Naive thymus-derived CD4-positive, alpha-beta T cell (primary cell): ENCODE measurements at regions of chr12 and their contacts with region 1.

Region 1: DNA sequence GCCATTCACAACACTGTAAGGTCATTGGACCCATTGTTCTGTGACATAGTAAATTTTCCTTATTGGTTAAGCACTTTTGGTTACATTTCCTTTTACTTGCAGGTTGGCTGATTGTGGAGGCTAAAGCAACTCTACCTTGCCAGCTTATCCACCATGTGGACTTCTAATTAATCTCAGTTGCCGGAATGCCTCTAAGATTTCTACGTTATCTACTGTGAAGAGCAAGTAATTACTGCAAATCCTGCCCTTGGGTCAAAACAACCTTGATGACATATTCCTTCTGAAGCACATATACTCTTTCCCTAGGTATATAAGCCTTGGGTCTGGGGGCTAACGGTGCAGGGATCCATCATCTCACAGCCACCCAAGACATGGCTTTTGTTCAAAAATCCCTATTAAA is 19.5 kb upstream of the MORN3 start:
- DNase-seq: no peak
- ATAC-seq: no peak
- H3K4me3 ChIP-seq: no peak overlapping the region
- H3K4me3 Mint-ChIP-seq: no peak overlapping the region
- H3K27ac ChIP-seq: no peak overlapping the region
- H3K27ac Mint-ChIP-seq: peak overlapping the region in 6 of 9 donors; percentile 8 to 36 (median 22)
- H3K4me1 ChIP-seq: peaks cover 0 to 4% of the 10 kb centered on the region in 2 donors
- H3K4me1 Mint-ChIP-seq: peaks cover 0 to 16% (median 10%) of the 10 kb centered on the region in 7 donors
- H3K27me3 ChIP-seq: no peaks in the 10 kb centered on the region
- H3K27me3 Mint-ChIP-seq: peaks cover 0 to 6% (median 0%) of the 10 kb centered on the region in 5 donors

Region 2: GRCh38 chr12:121467115-121467793 is 221.7 kb before region 1 on chr12:
- CTCF ChIA-PET with region 1: no interaction called
- POLR2A ChIA-PET with region 1: no interaction called
- intact Hi-C with region 1: loop called (anchors 1 kb)
- DNase-seq: peak; percentile 79 to 93 (median 86)
- ATAC-seq: peak; percentile 92
- H3K4me3 ChIP-seq: peak overlapping the region; percentile 44
- H3K4me3 Mint-ChIP-seq: peak overlapping the region in 6 of 10 donors; percentile 45 to 90 (median 59)
- H3K27ac ChIP-seq: peak overlapping the region; percentile 73
- H3K27ac Mint-ChIP-seq: no peak overlapping the region
- H3K4me1 ChIP-seq: peaks cover 7 to 17% of the 10 kb centered on the region in 2 donors
- H3K4me1 Mint-ChIP-seq: peaks cover 18 to 34% (median 30%) of the 10 kb centered on the region in 7 donors
- H3K27me3 ChIP-seq: no peaks in the 10 kb centered on the region
- H3K27me3 Mint-ChIP-seq: peaks cover 0 to 3% (median 0%) of the 10 kb centered on the region in 5 donors

Region 3: GRCh38 chr12:121550974-121551634 is 137.9 kb before region 1 on chr12:
- CTCF ChIA-PET with region 1: interaction called, 40 read pairs
- POLR2A ChIA-PET with region 1: no interaction called
- intact Hi-C with region 1: no loop called
- DNase-seq: no peak
- ATAC-seq: no peak
- H3K4me3 ChIP-seq: no peak overlapping the region
- H3K4me3 Mint-ChIP-seq: no peak overlapping the region
- H3K27ac ChIP-seq: no peak overlapping the region
- H3K27ac Mint-ChIP-seq: no peak overlapping the region
- H3K4me1 ChIP-seq: peaks cover 0 to 12% of the 10 kb centered on the region in 2 donors
- H3K4me1 Mint-ChIP-seq: peaks cover 0 to 7% (median 3%) of the 10 kb centered on the region in 7 donors
- H3K27me3 ChIP-seq: no peaks in the 10 kb centered on the region
- H3K27me3 Mint-ChIP-seq: no peaks in the 10 kb centered on the region

Region 4: DNA sequence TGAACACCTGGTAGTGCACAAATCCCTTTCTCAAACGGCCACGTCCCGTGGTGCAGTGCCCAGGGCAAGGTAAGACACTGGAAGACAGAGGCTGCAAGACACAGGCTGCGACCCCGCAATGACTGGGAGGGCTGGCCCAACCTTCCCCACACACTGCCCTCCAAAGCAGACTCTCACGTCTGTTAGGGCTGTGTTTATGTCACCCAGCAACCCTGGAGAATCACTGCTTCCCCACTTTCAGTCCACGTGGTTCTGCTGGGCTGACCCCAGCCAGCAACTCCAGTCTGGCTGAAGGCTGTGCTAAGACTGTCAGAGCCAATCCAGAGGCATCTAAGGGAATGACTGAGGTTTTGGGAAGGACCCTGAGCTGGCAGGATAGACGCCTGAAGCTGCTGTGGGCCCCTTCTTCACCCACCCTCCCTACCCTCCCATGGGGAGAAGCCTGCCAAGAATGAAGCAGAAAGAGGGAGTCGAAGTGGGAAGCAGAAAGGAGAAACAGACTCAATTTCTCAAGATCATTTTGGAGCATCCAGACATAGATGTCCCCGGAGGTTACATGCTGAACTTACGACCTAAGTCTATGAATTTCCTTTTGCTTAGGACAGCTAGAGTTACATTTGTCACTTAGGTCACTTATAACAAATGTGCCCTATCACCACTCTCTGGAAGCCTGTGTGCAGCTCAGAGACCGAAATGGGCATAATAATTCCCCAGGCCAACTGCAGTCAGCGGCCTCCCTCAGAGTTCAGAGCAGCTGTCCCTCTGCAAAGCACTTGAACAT is 119.8 kb before region 1 on chr12:
- CTCF ChIA-PET with region 1: no interaction called
- POLR2A ChIA-PET with region 1: no interaction called
- intact Hi-C with region 1: no loop called
- DNase-seq: no peak
- ATAC-seq: peak; percentile 36
- H3K4me3 ChIP-seq: no peak overlapping the region
- H3K4me3 Mint-ChIP-seq: no peak overlapping the region
- H3K27ac ChIP-seq: no peak overlapping the region
- H3K27ac Mint-ChIP-seq: peak overlapping the region in 6 of 9 donors; percentile 4 to 61 (median 34)
- H3K4me1 ChIP-seq: no peaks in the 10 kb centered on the region
- H3K4me1 Mint-ChIP-seq: peaks cover 3 to 32% (median 28%) of the 10 kb centered on the region in 7 donors
- H3K27me3 ChIP-seq: no peaks in the 10 kb centered on the region
- H3K27me3 Mint-ChIP-seq: no peaks in the 10 kb centered on the region

Region 5: GRCh38 chr12:121590476-121591143 is 98.4 kb before region 1 on chr12:
- CTCF ChIA-PET with region 1: no interaction called
- POLR2A ChIA-PET with region 1: interaction called, 5 read pairs
- intact Hi-C with region 1: loop called in 1 of 2 experiments (anchors 1 kb)
- DNase-seq: peak; percentile 38 to 88 (median 83)
- ATAC-seq: peak; percentile 81
- H3K4me3 ChIP-seq: peak overlapping the region; percentile 76
- H3K4me3 Mint-ChIP-seq: peak overlapping the region; percentile 59 to 94 (median 90)
- H3K27ac ChIP-seq: peak overlapping the region; percentile 90
- H3K27ac Mint-ChIP-seq: peak overlapping the region; percentile 97 to 100 (median 99)
- H3K4me1 ChIP-seq: peaks cover 24 to 26% of the 10 kb centered on the region in 2 donors
- H3K4me1 Mint-ChIP-seq: peaks cover 16 to 53% (median 38%) of the 10 kb centered on the region in 7 donors
- H3K27me3 ChIP-seq: no peaks in the 10 kb centered on the region
- H3K27me3 Mint-ChIP-seq: peaks cover 0 to 3% (median 0%) of the 10 kb centered on the region in 5 donors

Region 6: DNA sequence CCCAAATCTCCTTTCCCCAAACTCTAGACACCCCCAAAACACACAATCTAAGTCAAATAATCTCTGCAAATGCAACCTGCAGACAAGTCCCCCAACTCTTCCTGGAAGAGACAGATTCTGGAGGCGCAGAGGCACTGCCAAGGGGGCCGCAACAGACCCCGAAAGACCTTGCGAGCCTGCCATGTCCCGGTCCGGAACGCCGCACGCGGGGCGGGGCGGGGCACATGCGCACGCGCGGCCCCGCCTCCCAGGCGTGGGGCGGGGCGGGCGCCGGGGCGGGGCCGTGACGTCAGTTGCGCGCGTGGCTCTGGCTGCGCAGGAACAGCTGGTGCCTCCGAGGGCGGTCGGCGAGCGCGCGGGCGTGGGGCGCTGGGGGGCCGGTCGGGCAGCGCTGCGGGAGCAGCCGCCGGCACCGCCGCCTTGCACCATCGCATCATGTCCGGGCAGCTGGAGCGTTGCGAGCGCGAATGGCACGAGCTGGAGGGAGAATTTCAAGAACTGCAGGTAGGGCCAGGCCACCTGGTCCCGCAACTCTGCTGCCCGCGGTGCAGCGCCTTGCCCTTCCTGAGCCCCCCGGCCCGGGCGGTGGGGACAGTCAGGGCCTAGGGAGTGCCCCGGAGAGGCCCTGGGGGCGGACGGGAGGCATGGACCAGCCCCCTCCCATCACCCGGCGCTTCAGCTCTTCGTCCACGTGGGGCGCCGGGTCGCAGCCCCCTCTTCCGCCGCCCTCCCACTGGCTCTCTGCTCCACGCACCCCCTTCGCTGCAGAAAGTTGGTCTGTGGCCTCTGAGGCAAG is 23.7 kb after region 1 on chr12 and contains the start of gene TMEM120B:
- CTCF ChIA-PET with region 1: no interaction called
- POLR2A ChIA-PET with region 1: interaction called, 4 read pairs
- intact Hi-C with region 1: loop called (anchors 1 kb)
- DNase-seq: peak; percentile 75 to 91 (median 86)
- ATAC-seq: peak; percentile 97
- H3K4me3 ChIP-seq: peak within 1 kb of the TSS; percentile 99
- H3K4me3 Mint-ChIP-seq: peak within 1 kb of the TSS; percentile 84 to 97 (median 94)
- H3K27ac ChIP-seq: peak within 1 kb of the TSS; percentile 82
- H3K27ac Mint-ChIP-seq: peak within 1 kb of the TSS; percentile 86 to 96 (median 92)
- H3K4me1 ChIP-seq: peaks cover 11 to 12% of the 10 kb centered on the region in 2 donors
- H3K4me1 Mint-ChIP-seq: peaks cover 7 to 37% (median 26%) of the 10 kb centered on the region in 7 donors
- H3K27me3 ChIP-seq: no peaks in the 10 kb centered on the region
- H3K27me3 Mint-ChIP-seq: no peaks in the 10 kb centered on the region
- total RNA-seq, gene TMEM120B: 7.3 to 14.3 (median 9.2) TPM

Region 7: DNA sequence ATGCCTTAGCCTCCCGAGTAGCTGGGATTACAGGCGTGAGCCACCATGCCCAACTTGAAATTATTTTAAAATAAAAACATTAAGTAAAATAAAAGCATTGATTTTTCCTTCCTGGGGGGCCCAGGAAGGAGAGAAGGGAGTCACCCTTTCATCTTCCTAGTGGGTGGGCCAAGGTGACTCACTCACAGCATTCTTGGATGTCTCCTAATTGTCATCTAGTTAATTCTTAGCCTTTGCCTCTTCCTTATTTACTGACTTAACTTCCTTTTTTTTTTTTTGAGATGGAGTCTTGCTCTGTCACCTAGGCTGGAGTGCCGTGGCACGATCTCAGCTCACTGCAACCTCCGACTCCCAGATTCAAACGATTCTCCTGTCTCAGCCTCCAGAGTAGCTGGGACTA is 52.8 kb after region 1 on chr12:
- CTCF ChIA-PET with region 1: no interaction called
- POLR2A ChIA-PET with region 1: no interaction called
- intact Hi-C with region 1: no loop called
- DNase-seq: no peak
- ATAC-seq: no peak
- H3K4me3 ChIP-seq: no peak overlapping the region
- H3K4me3 Mint-ChIP-seq: no peak overlapping the region
- H3K27ac ChIP-seq: no peak overlapping the region
- H3K27ac Mint-ChIP-seq: no peak overlapping the region
- H3K4me1 ChIP-seq: no peaks in the 10 kb centered on the region
- H3K4me1 Mint-ChIP-seq: peaks cover 0 to 2% (median 0%) of the 10 kb centered on the region in 7 donors
- H3K27me3 ChIP-seq: no peaks in the 10 kb centered on the region
- H3K27me3 Mint-ChIP-seq: no peaks in the 10 kb centered on the region

Region 8: GRCh38 chr12:121802846-121803630 is 114.1 kb after region 1 on chr12:
- CTCF ChIA-PET with region 1: interaction called, 57 read pairs
- POLR2A ChIA-PET with region 1: interaction called, 12 read pairs
- intact Hi-C with region 1: loop called (anchors 1 kb)
- DNase-seq: peak; percentile 84 to 94 (median 92)
- ATAC-seq: peak; percentile 65
- H3K4me3 ChIP-seq: peak overlapping the region; percentile 94
- H3K4me3 Mint-ChIP-seq: peak overlapping the region; percentile 89 to 99 (median 96)
- H3K27ac ChIP-seq: peak overlapping the region; percentile 96
- H3K27ac Mint-ChIP-seq: peak overlapping the region; percentile 98 to 100 (median 99)
- H3K4me1 ChIP-seq: peaks cover 21 to 28% of the 10 kb centered on the region in 2 donors
- H3K4me1 Mint-ChIP-seq: peaks cover 25 to 37% (median 29%) of the 10 kb centered on the region in 7 donors
- H3K27me3 ChIP-seq: no peaks in the 10 kb centered on the region
- H3K27me3 Mint-ChIP-seq: no peaks in the 10 kb centered on the region

Region 9: DNA sequence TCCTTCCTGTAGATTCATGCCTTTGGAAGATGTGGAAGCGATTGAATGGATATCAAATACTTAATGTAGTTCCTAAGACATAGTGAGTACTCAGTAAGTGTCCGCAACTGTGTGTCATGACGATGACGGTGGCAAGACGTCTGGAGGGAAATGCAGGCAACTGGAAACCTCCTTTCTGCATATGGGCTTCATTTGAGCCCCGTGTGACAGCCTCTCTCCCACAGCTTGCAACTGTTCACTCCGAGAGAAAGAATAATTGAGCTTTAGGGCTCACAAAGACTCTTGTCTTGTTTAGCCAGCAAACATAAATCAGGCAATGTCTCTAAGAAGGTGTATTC is 236.4 kb after region 1 on chr12:
- CTCF ChIA-PET with region 1: no interaction called
- POLR2A ChIA-PET with region 1: no interaction called
- intact Hi-C with region 1: no loop called
- DNase-seq: no peak
- ATAC-seq: no peak
- H3K4me3 ChIP-seq: no peak overlapping the region
- H3K4me3 Mint-ChIP-seq: no peak overlapping the region
- H3K27ac ChIP-seq: no peak overlapping the region
- H3K27ac Mint-ChIP-seq: no peak overlapping the region
- H3K4me1 ChIP-seq: no peaks in the 10 kb centered on the region
- H3K4me1 Mint-ChIP-seq: peaks cover 0 to 6% (median 0%) of the 10 kb centered on the region in 7 donors
- H3K27me3 ChIP-seq: no peaks in the 10 kb centered on the region
- H3K27me3 Mint-ChIP-seq: peaks cover 0 to 3% (median 0%) of the 10 kb centered on the region in 5 donors

Region 10: GRCh38 chr12:122356192-122356635 is 667.2 kb after region 1 on chr12:
- CTCF ChIA-PET with region 1: no interaction called
- POLR2A ChIA-PET with region 1: no interaction called
- intact Hi-C with region 1: no loop called
- DNase-seq: peak in 8 of 9 donors; percentile 31 to 58 (median 41)
- ATAC-seq: peak; percentile 86
- H3K4me3 ChIP-seq: no peak overlapping the region
- H3K4me3 Mint-ChIP-seq: no peak overlapping the region
- H3K27ac ChIP-seq: no peak overlapping the region
- H3K27ac Mint-ChIP-seq: peak overlapping the region in 5 of 9 donors; percentile 13 to 59 (median 35)
- H3K4me1 ChIP-seq: no peaks in the 10 kb centered on the region
- H3K4me1 Mint-ChIP-seq: peaks cover 0 to 7% (median 4%) of the 10 kb centered on the region in 7 donors
- H3K27me3 ChIP-seq: no peaks in the 10 kb centered on the region
- H3K27me3 Mint-ChIP-seq: no peaks in the 10 kb centered on the region